ENCODE measurements at regions of chr12 and their contacts with region 1.

Region 1: GRCh38 chr12:101759396-101760047 is 20.3 kb upstream of the SYCP3 start:
- DNase-seq: no peak
- ATAC-seq: no peak
- H3K4me3 ChIP-seq: no peak overlapping the region
- H3K27ac ChIP-seq: no peak overlapping the region
- H3K4me1 ChIP-seq: peaks cover 0 to 28% (median 0%) of the 10 kb centered on the region in 9 donors
- H3K27me3 ChIP-seq: no peaks in the 10 kb centered on the region
- CTCF ChIP-seq: peak; percentile 40 to 76 (median 69)

Region 2: DNA sequence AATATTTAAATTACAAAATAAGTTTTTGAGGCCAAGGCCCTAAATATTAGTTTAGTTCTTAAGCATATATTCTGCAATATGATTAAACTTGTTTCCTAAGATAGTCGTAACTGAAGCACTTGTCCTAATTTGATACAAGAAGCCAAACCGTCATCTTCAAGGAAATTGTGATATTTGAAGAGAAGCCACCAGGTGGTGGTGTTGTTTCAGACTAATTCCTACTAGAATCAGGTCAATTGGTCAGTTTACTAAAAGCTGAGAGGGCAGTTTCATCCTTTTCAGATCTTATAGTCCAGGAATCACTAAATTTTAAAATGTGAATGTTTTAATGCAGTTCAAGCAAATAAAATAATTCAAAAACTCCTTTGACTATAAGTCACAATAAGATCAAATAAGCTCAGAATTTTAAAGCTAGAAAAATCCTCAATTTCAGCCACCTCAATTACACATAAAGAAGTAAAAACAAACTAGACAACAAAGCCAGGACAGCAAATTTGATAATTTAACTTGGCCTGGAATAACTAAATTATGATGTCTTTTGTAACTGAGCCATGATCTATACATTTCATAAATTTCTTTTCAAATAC is 344.9 kb before region 1 on chr12:
- intact Hi-C with region 1: loop called in 3 of 10 experiments (anchors 5 to 10 kb)
- DNase-seq: peak in 1 of 2 donors; percentile 30
- ATAC-seq: no peak
- H3K4me3 ChIP-seq: no peak overlapping the region
- H3K27ac ChIP-seq: no peak overlapping the region
- H3K4me1 ChIP-seq: no peaks in the 10 kb centered on the region
- H3K27me3 ChIP-seq: no peaks in the 10 kb centered on the region
- CTCF ChIP-seq: peak; percentile 22 to 67 (median 58)

Region 3: GRCh38 chr12:101490286-101490920 is 269.1 kb before region 1 on chr12:
- intact Hi-C with region 1: loop called in 2 of 10 experiments (anchors 5 kb)
- DNase-seq: peak in 1 of 2 donors; percentile 5
- ATAC-seq: peak in 7 of 8 donors; percentile 34 to 80 (median 55)
- H3K4me3 ChIP-seq: no peak overlapping the region
- H3K27ac ChIP-seq: no peak overlapping the region
- H3K4me1 ChIP-seq: peaks cover 0 to 15% (median 0%) of the 10 kb centered on the region in 9 donors
- H3K27me3 ChIP-seq: peaks cover 0 to 10% (median 0%) of the 10 kb centered on the region in 7 donors
- CTCF ChIP-seq: peak in 8 of 9 donors; percentile 9 to 57 (median 47)

Region 4: DNA sequence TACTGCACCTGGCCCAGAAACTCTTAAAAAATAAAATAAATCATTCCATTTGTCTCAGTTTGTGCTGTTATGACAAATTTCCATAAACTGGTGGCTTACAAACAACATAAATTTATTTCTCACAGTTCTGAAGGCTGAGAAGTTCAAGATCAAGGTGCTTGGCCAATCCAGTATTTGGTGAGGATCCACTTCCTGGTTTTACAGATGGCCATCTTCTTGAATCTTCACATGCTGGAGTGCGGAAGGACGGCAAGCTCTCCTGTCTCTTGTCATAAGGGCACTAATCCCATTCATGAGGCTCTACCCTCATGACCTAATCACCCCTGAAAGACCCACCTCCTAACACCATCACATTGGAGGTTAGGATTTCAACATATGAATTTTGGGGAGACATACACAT is 194.6 kb before region 1 on chr12:
- intact Hi-C with region 1: loop called in 2 of 10 experiments (anchors 10 kb)
- DNase-seq: no peak
- ATAC-seq: no peak
- H3K4me3 ChIP-seq: no peak overlapping the region
- H3K27ac ChIP-seq: no peak overlapping the region
- H3K4me1 ChIP-seq: peaks cover 0 to 6% (median 0%) of the 10 kb centered on the region in 9 donors
- H3K27me3 ChIP-seq: peaks cover 0 to 27% (median 8%) of the 10 kb centered on the region in 7 donors
- CTCF ChIP-seq: no peak

Region 5: GRCh38 chr12:101570047-101570446 is 189.5 kb before region 1 on chr12:
- intact Hi-C with region 1: loop called in 2 of 10 experiments (anchors 10 kb)
- DNase-seq: no peak
- ATAC-seq: peak in 4 of 8 donors; percentile 31 to 66 (median 48)
- H3K4me3 ChIP-seq: no peak overlapping the region
- H3K27ac ChIP-seq: no peak overlapping the region
- H3K4me1 ChIP-seq: peaks cover 0 to 6% (median 0%) of the 10 kb centered on the region in 9 donors
- H3K27me3 ChIP-seq: peaks cover 0 to 50% (median 10%) of the 10 kb centered on the region in 7 donors
- CTCF ChIP-seq: peak in 6 of 9 donors; percentile 22 to 49 (median 36)

Region 6: GRCh38 chr12:101670007-101670687 is 89.4 kb before region 1 on chr12:
- intact Hi-C with region 1: loop called in 2 of 10 experiments (anchors 10 kb)
- DNase-seq: peak in 1 of 2 donors; percentile 9
- ATAC-seq: peak in 7 of 8 donors; percentile 33 to 72 (median 54)
- H3K4me3 ChIP-seq: no peak overlapping the region
- H3K27ac ChIP-seq: no peak overlapping the region
- H3K4me1 ChIP-seq: peaks cover 0 to 18% (median 0%) of the 10 kb centered on the region in 9 donors
- H3K27me3 ChIP-seq: peaks cover 0 to 10% (median 0%) of the 10 kb centered on the region in 7 donors
- CTCF ChIP-seq: peak in 8 of 9 donors; percentile 31 to 62 (median 54)

Region 7: GRCh38 chr12:101819467-101819866 is 59.9 kb after region 1 on chr12:
- intact Hi-C with region 1: no loop called
- DNase-seq: no peak
- ATAC-seq: no peak
- H3K4me3 ChIP-seq: no peak overlapping the region
- H3K27ac ChIP-seq: no peak overlapping the region
- H3K4me1 ChIP-seq: peaks cover 0 to 31% (median 28%) of the 10 kb centered on the region in 9 donors
- H3K27me3 ChIP-seq: no peaks in the 10 kb centered on the region
- CTCF ChIP-seq: no peak

Region 8: GRCh38 chr12:101839324-101840283 is 80.1 kb after region 1 on chr12:
- intact Hi-C with region 1: no loop called
- DNase-seq: peak in 1 of 2 donors; percentile 74
- ATAC-seq: peak; percentile 34 to 76 (median 54)
- H3K4me3 ChIP-seq: no peak overlapping the region
- H3K27ac ChIP-seq: no peak overlapping the region
- H3K4me1 ChIP-seq: peaks cover 0 to 15% (median 0%) of the 10 kb centered on the region in 9 donors
- H3K27me3 ChIP-seq: peaks cover 0 to 3% (median 0%) of the 10 kb centered on the region in 7 donors
- CTCF ChIP-seq: peak; percentile 76 to 92 (median 87)